Activated CD4-positive, alpha-beta T cell treated with anti-CD3 and anti-CD28 coated beads, Interleukin-2, amount 10 ng/mL, durations not matched to agents 24 days and 14 days (primary cell): ENCODE measurements at regions of chr4 and their contacts with region 1.

Region 1: GRCh38 chr4:154551872-154552686 is 1.9 kb upstream of the PLRG1 start:
- DNase-seq: peak; percentile 90
- H3K4me3 Mint-ChIP-seq: no peak overlapping the region
- H3K27ac Mint-ChIP-seq: no peak overlapping the region
- H3K4me1 Mint-ChIP-seq: peaks cover 16% of the 10 kb centered on the region
- H3K27me3 Mint-ChIP-seq: peaks cover 4% of the 10 kb centered on the region

Region 2: DNA sequence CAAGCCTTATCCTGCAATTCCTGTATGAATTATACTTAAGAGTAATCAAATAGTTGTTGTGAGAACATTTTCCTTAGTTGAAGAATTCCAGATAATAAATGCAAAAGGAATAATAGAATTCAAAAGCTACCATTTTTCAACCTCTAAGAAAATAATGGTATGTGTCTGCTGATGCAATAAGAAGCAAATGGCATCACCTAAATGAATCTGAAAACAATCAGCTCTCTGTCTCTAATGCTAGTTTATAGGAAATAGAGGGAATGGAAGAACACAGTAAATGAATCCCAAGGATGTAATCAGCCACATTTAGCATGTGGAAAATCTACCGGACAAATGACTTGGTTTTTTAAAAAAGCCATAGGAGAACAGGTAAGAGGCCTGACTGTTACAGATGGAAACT is 175.6 kb before region 1 on chr4:
- intact Hi-C with region 1: no loop called
- DNase-seq: no peak
- H3K4me3 Mint-ChIP-seq: no peak overlapping the region
- H3K27ac Mint-ChIP-seq: no peak overlapping the region
- H3K4me1 Mint-ChIP-seq: no peaks in the 10 kb centered on the region
- H3K27me3 Mint-ChIP-seq: peaks cover 24% of the 10 kb centered on the region

Region 3: DNA sequence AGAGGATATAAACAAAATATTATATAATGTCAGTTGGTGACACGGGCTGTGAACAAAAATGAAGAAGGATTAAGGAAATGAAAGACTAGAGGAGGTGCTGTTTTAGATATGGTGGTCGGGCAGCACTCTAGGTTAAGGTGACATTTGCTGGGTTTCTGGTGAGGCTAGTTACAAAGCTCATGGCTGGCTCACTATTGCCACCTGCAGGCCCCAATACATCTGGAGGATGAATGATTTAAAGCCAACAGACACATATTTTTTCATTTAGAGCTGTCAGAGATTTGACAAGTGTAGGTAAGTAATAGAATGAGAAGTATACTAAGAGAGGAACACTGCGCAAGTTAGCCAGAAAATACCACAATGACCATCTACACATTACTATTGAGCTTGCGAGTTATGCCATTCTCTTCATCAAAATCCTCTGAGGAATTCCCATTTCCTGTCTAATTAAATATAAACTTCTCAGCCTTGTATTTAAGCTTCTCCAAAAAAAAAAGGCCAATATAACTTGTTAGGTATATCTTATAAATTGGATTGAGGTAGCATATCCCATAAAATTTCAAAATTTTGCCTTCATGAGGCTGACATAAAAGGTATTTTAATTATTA is 66.7 kb after region 1 on chr4:
- intact Hi-C with region 1: loop called (anchors 1 kb)
- DNase-seq: peak; percentile 88
- H3K4me3 Mint-ChIP-seq: no peak overlapping the region
- H3K27ac Mint-ChIP-seq: no peak overlapping the region
- H3K4me1 Mint-ChIP-seq: peaks cover 12% of the 10 kb centered on the region
- H3K27me3 Mint-ChIP-seq: peaks cover 18% of the 10 kb centered on the region

Region 4: GRCh38 chr4:154720123-154720522 is 168.0 kb after region 1 on chr4:
- intact Hi-C with region 1: loop called (anchors 5 kb)
- DNase-seq: no peak
- H3K4me3 Mint-ChIP-seq: no peak overlapping the region
- H3K27ac Mint-ChIP-seq: no peak overlapping the region
- H3K4me1 Mint-ChIP-seq: peaks cover 11% of the 10 kb centered on the region
- H3K27me3 Mint-ChIP-seq: peaks cover 10% of the 10 kb centered on the region

Region 5: DNA sequence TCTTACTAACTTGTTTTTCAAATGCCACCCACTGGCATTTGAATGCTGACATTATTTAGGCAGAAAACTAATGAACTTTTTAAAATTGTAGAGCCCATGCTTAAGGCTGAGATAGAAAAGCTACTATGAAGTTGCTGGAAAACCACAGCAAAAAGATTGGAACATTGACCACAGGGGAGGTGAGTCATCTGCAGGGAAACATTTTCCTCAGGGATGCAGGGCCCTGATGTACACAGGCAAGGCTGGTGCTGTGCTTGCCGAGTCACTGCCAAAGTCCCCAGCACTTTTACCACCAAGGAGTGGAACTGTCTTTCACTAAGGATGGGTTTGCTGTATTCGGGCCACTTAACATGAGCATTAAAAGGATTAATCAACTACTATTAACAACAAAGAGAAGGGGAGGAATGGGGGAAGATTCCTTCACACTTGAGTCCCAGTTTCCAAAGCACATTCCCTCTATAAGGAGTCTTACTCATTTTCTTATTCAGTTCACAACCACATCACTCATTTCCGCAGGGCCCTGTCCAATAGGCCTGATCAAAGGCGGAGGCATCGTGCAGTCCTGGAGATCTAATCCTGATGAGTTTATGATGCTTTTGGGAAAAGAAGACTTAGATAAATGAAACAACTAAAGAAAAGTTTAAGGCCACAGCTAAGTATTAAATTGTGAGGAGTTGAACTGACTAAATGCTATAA is 453.5 kb after region 1 on chr4:
- intact Hi-C with region 1: no loop called
- DNase-seq: no peak
- H3K4me3 Mint-ChIP-seq: no peak overlapping the region
- H3K27ac Mint-ChIP-seq: no peak overlapping the region
- H3K4me1 Mint-ChIP-seq: no peaks in the 10 kb centered on the region
- H3K27me3 Mint-ChIP-seq: no peaks in the 10 kb centered on the region

Region 6: DNA sequence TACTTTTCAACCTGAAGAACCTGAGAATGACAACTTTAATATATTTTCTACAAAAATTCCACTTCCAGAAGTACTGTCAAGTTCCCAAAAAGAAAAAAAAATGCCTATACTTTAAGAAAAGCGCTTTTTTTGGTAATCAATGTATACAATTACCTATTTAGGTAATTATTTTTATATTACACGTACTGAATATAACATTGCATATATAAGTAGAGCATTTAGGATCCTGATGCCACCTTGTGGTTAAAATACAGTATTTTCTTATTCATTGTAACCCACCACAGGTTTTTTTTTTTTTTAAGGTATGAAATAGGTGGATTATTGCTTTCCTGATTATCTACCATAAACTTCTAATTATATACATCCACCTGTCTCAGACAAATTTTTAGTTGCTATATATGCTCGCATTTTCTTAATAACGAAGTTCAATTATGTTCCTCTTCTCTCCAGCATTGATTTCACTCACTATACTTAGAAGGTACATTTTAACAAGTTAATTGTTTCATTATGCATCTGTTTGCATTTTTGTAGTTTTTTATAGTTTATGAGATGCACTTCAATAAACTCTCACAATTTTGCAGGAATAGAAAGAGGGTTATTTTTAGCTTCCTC is 819.5 kb after region 1 on chr4:
- intact Hi-C with region 1: loop called (anchors 1 kb)
- DNase-seq: no peak
- H3K4me3 Mint-ChIP-seq: no peak overlapping the region
- H3K27ac Mint-ChIP-seq: no peak overlapping the region
- H3K4me1 Mint-ChIP-seq: peaks cover 8% of the 10 kb centered on the region
- H3K27me3 Mint-ChIP-seq: no peaks in the 10 kb centered on the region